ENCODE measurements at regions of chr11 and their contacts with region 1.

Region 1: DNA sequence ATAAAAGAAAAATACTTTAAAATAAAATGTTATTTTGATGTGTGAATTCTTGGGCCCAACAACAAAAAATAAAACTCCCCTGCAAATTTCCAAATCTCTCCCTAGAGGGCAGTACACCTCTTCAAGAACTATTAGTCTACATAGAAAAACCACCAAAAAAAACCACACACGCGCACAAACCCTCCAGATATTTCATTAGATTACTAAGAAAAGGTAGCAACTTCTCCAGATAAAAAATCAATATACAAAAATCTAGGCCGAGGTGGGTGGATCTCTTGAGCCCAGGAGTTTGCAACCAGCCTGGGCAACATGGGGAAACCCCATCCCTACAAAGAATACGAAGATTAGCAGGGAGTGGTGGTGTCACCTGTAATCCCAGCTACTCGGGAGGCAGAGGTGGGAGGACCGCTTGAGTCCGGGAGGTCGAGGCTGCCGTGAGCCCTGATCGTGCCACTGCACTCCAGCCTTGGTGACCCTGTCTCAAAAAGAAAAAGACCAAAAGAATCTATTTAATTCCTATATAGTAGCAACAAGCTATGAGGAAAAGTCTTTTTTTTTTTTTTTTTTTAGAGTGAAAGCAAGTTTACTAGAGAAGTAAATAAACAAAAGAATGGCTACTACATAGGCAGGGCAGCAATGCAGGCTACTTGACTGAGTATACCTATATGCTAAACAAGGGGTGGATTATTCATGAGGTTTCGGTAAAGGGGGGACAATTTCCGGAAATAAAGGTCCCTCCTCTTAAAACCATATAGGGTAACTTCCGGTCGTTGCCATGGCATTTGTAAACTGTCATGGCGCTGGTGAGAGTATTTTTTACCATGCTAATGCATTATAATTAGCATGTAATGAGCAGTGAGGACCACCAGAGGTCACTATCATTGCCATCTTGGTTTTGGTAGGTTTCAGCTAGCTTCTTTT is 13.1 kb downstream of the B3GNT6 start:
- DNase-seq: peak; percentile 91
- ATAC-seq: peak; percentile 87
- H3K4me3 ChIP-seq: peak overlapping the region; percentile 38; the same call in 1 of the 2 replicates
- H3K27ac ChIP-seq: no peak overlapping the region
- H3K4me1 ChIP-seq: no peaks in the 10 kb centered on the region
- H3K27me3 ChIP-seq: peaks cover 11% of the 10 kb centered on the region
- CTCF ChIP-seq: peak; percentile 86
- POLR2A ChIP-seq: no peak
- RAD21 ChIP-seq: peak; percentile 75

Region 2: DNA sequence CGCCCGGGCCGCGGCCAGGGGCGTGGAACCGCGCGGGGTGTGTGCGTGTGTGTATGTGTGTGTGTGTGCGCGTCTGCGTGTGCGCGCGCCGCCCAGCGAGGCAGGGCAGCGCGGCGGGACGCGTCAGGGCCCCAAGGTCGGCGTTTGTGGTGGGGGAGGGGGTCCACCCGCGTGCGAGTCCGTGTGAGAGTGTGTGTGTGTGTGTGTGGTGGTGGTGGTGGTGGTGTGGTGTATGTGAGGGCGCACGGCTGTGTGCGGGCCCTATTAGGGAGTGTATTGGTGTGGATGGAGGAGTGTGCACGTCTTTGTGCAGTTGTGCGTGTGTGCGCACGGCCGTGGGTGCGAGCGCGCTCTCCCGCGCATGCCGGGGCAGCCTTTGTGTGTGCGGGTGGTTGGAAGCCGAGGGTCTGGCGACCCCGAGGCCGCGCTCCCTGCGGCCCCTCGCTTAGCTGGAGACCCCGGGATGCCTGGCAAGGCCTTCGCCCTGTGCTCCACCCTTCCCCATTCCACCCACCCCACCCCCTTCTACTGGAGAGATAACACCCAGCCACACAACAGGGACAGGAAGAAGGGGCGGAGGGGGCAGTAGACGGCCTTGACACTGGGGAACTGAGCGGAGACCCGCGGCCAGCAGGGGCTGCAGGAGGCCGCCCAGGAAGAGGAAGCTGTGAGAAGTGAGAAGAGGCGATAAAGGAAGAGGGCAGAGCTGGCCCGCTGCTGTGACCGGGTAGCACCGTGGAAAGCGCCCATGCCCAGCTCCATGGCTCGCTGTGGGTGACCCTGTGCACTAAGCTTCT is 1695.3 kb before region 1 on chr11:
- CTCF ChIA-PET with region 1: no interaction called
- POLR2A ChIA-PET with region 1: no interaction called
- dilution Hi-C with region 1: no loop called
- in situ Hi-C with region 1: no loop called
- intact Hi-C with region 1: no loop called
- DNase-seq: no peak
- ATAC-seq: peak; percentile 10; the same call in 1 of the 2 replicates
- H3K4me3 ChIP-seq: peak overlapping the region; percentile 68
- H3K27ac ChIP-seq: peak overlapping the region; percentile 43
- H3K4me1 ChIP-seq: peaks cover 37% of the 10 kb centered on the region
- H3K27me3 ChIP-seq: peaks cover 5% of the 10 kb centered on the region
- CTCF ChIP-seq: no peak
- POLR2A ChIP-seq: 0 out of 2 replicates have a peak, but pooled peaks have one; percentile 4
- RAD21 ChIP-seq: no peak

Region 3: DNA sequence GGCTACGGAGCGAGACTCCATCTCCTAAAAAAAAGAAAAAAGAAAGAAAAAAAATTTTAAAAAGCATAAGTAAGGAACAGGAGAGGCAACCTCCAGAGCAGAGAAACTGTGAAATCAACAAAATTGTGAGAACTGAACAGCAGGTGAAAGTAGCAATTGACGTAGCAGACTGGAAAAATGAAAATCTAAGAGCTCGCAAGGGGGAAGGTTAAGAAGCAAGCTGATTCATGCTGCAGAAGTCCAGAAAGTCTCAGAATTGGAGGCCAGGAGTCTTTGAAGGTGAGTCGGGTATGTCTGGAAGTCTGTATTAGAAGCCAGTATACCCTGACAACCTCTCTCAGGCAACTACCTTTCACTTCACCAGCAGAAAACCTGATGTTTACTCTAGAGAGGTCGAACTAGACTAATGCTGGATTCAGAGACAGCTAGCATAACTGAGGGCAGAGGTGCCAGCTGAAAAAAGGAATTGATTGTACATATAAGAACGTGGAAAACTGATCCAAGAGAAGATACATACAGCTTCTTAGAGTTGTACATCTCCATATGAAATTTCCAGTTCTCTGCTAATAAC is 1002.4 kb before region 1 on chr11:
- CTCF ChIA-PET with region 1: no interaction called
- POLR2A ChIA-PET with region 1: interaction called, 12 read pairs
- dilution Hi-C with region 1: no loop called
- in situ Hi-C with region 1: no loop called
- intact Hi-C with region 1: no loop called
- DNase-seq: no peak
- ATAC-seq: no peak
- H3K4me3 ChIP-seq: no peak overlapping the region
- H3K27ac ChIP-seq: no peak overlapping the region
- H3K4me1 ChIP-seq: no peaks in the 10 kb centered on the region
- H3K27me3 ChIP-seq: no peaks in the 10 kb centered on the region
- CTCF ChIP-seq: no peak
- POLR2A ChIP-seq: no peak
- RAD21 ChIP-seq: no peak

Region 4: DNA sequence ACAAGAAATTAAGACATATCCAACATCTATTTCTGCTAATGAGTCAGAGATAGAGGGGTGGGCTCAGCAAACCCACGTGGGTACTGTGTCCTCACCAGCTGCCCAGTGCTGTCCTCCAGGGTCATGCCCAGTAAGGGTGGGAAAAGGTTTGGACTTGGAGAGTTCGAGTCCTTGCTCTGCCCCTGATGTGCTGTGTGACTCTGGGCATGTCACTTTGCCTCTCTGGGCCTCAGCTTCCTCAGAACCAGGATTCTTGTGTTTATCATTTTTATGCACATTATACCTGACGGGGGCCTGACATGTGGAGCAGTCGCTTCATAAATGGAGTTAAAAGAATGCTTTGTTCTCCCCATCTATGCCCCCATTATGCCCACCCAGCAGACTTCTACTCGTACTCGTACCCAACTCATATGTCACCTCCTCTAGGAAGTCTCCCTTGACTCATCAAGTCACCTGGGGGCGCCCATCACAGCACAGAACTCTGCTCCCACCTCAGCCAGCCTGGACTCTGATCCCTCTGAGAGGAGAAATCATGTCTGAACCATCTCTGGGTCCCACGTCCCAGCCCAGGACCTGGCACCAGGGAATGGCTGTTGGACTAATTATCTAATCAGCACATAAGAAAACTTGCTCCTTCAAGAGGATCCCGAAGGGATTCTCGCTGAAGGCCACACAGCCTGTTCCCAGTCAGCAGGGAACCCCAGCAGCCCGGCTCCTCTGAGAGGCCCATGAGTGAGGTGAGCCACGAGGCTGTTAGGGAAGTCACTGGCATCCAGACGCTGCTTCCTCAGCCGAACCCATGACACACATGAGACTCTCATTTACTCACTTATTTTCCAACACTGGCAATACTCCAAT is 302.9 kb before region 1 on chr11:
- CTCF ChIA-PET with region 1: no interaction called
- POLR2A ChIA-PET with region 1: no interaction called
- dilution Hi-C with region 1: no loop called
- in situ Hi-C with region 1: loop called (anchors 25 kb)
- intact Hi-C with region 1: no loop called
- DNase-seq: peak; percentile 36
- ATAC-seq: no peak
- H3K4me3 ChIP-seq: no peak overlapping the region
- H3K27ac ChIP-seq: no peak overlapping the region
- H3K4me1 ChIP-seq: no peaks in the 10 kb centered on the region; the same call in 1 of the 2 replicates
- H3K27me3 ChIP-seq: peaks cover 42% of the 10 kb centered on the region
- CTCF ChIP-seq: no peak
- POLR2A ChIP-seq: no peak
- RAD21 ChIP-seq: no peak

Region 5: DNA sequence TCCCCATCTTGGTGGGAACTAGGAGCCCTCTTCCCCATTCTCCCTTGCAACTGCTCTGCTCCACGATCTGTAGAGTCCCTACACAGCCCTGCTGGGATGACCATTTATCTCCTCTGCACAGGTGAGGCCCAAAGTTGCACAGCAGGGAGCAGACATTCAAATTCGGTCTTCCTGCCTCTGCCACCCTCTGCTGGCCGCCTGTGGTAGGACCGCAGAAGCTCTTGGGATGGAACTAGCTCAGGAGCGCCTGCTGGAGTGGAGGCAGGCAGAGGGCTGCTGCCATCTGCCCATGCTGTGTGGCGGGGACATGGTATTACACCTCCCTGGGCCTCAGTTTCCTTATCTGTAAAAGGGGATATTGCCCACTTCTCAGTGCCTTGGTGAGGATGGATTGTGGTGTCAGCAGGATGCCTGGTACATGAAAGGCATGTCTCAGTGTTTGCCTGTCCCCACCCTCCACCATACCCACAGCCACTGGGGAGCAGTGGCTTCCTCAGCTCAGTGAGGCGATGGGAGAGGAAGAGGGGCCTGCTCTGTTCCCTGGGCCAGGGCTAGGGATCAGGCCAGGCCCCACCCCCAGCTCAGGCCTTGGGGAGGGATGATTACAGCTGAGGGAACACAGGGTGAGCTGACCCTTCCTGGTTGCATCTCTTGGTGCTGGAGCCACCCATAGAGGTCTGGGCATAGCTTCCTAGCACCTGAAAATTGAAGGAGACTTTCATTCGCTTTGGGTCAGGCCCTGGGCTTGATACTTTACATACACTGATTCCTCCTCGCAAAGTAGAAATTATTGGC is 44.1 kb after region 1 on chr11:
- CTCF ChIA-PET with region 1: interaction called, 21 read pairs
- POLR2A ChIA-PET with region 1: interaction called, 9 read pairs
- dilution Hi-C with region 1: no loop called
- in situ Hi-C with region 1: loop called (anchors 5 kb)
- intact Hi-C with region 1: loop called (anchors 1 kb)
- DNase-seq: peak; percentile 65
- ATAC-seq: peak; percentile 99
- H3K4me3 ChIP-seq: no peak overlapping the region
- H3K27ac ChIP-seq: no peak overlapping the region
- H3K4me1 ChIP-seq: no peaks in the 10 kb centered on the region
- H3K27me3 ChIP-seq: no peaks in the 10 kb centered on the region
- CTCF ChIP-seq: peak; percentile 96
- POLR2A ChIP-seq: peak; percentile 50; the same call in 1 of the 2 replicates
- RAD21 ChIP-seq: peak; percentile 94

Region 6: GRCh38 chr11:77113382-77114088 is 66.3 kb after region 1 on chr11:
- CTCF ChIA-PET with region 1: no interaction called
- POLR2A ChIA-PET with region 1: no interaction called
- dilution Hi-C with region 1: no loop called
- in situ Hi-C with region 1: no loop called
- intact Hi-C with region 1: loop called (anchors 1 kb)
- DNase-seq: peak; percentile 38
- ATAC-seq: no peak
- H3K4me3 ChIP-seq: no peak overlapping the region
- H3K27ac ChIP-seq: no peak overlapping the region
- H3K4me1 ChIP-seq: peaks cover 5% of the 10 kb centered on the region
- H3K27me3 ChIP-seq: no peaks in the 10 kb centered on the region
- CTCF ChIP-seq: peak; percentile 64
- POLR2A ChIP-seq: no peak
- RAD21 ChIP-seq: peak; percentile 53

Region 7: GRCh38 chr11:77547863-77548551 is 500.7 kb after region 1 on chr11:
- CTCF ChIA-PET with region 1: no interaction called
- POLR2A ChIA-PET with region 1: no interaction called
- dilution Hi-C with region 1: no loop called
- in situ Hi-C with region 1: no loop called
- intact Hi-C with region 1: loop called (anchors 10 kb)
- DNase-seq: peak; percentile 79
- ATAC-seq: peak; percentile 83
- H3K4me3 ChIP-seq: no peak overlapping the region
- H3K27ac ChIP-seq: no peak overlapping the region
- H3K4me1 ChIP-seq: no peaks in the 10 kb centered on the region; the same call in 1 of the 2 replicates
- H3K27me3 ChIP-seq: no peaks in the 10 kb centered on the region
- CTCF ChIP-seq: peak; percentile 84
- POLR2A ChIP-seq: no peak
- RAD21 ChIP-seq: peak; percentile 85